Tibial artery (tissue), 4 donors: ENCODE measurements at regions of chr10 and their contacts with region 1.

Region 1: DNA sequence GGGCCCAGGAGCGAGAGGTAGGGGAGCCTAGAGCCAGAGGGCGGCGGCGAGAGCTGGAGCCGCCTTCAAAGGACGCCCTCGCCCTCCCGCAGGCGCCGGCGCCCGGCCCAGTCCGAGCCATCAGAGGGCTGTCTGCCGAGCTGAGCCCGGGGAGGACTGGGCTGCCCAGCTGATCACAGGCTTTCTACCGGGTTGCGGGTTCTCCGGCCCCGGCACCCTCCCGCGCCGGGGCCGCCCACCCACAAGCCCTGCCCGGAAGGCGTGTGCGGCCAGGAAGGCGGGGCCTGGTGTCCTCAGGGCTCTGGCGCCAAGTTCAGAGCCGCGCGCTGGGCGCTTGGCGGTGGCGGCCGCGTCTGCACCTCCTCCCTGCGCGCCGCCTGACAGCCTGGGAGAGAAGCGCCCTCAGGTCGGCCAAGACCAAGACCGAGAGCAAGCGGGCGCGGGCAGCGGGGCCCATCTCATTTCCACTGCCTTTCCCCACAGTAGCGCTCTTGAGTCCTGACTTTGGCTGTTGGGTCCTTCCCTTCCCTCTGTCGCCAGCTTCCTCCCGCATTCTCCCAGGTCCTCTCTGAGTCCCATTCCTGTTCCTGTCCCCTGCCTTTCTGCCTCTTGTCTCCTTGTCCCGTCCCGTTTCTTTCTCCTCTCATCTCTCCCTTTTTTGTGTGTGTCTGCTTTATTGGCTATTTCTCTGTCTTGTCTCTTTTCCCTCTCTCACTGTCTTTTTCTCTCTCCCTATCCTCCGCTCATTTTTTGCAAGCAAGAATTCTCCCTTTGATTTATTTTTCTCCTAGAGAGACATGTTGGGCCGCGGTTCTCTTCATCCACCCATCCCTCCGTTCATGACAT is 60.6 kb upstream of the MSMB start:
- DNase-seq: peak; percentile 58 to 80
- H3K4me3 ChIP-seq: peak overlapping the region; percentile 57 to 70
- H3K27ac ChIP-seq: peak overlapping the region; percentile 5 to 50
- H3K4me1 ChIP-seq: peaks cover 0 to 13% (median 7%) of the 10 kb centered on the region in 4 donors
- H3K27me3 ChIP-seq: no peaks in the 10 kb centered on the region
- CTCF ChIP-seq: peak; percentile 21 to 33

Region 2: DNA sequence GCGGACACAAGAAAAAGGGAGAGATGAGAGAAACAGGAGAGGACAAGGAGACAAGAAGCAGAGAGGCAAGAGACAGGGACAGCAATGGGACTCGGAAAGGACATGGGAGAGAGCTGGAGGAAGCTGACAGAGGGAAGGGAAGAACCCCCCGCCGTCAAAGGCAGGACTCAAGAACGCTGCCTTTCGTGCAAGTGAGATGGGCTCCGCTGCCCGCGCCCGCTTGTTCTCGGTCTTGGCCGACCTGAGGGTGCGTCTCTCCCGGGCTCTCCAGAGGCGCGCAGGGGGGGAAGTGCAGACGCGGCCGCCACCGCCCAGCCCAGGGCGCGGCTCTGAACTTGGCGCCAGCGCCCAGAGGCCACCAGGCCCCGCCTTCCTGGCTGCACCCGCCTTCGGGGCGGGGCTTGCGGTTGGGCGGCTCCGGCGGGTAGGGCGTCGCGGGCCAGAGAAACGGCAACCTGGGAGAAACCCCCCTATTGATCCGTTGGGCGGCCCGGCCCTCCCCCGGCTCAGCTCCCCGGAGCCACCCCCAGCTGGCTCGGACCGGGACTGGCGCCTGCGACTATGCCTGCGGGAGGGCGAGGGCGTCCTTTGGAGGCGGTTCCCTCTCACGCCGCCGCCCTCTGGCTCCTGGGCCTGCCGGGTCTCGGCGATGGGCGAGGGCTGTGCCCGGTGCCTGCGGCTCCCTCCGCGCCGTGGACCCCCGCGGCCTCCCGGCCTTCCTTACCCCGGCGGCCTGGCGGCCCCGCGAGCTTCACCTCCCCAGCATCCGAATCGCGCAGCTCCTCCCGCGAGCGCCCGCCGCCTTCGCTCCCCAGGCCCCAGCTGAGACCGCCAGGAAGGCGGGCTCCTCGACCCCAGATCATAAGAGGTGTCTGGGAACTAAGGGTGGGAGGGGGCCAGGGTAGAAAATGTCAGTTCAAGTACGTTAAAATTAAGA is 177.9 kb after region 1 on chr10:
- intact Hi-C with region 1: loop called (anchors 5 kb)
- DNase-seq: peak; percentile 82 to 93
- H3K4me3 ChIP-seq: peak overlapping the region; percentile 75 to 76
- H3K27ac ChIP-seq: peak overlapping the region; percentile 80 to 91
- H3K4me1 ChIP-seq: peaks cover 0 to 38% (median 17%) of the 10 kb centered on the region in 4 donors
- H3K27me3 ChIP-seq: no peaks in the 10 kb centered on the region
- CTCF ChIP-seq: no peak

Region 3: DNA sequence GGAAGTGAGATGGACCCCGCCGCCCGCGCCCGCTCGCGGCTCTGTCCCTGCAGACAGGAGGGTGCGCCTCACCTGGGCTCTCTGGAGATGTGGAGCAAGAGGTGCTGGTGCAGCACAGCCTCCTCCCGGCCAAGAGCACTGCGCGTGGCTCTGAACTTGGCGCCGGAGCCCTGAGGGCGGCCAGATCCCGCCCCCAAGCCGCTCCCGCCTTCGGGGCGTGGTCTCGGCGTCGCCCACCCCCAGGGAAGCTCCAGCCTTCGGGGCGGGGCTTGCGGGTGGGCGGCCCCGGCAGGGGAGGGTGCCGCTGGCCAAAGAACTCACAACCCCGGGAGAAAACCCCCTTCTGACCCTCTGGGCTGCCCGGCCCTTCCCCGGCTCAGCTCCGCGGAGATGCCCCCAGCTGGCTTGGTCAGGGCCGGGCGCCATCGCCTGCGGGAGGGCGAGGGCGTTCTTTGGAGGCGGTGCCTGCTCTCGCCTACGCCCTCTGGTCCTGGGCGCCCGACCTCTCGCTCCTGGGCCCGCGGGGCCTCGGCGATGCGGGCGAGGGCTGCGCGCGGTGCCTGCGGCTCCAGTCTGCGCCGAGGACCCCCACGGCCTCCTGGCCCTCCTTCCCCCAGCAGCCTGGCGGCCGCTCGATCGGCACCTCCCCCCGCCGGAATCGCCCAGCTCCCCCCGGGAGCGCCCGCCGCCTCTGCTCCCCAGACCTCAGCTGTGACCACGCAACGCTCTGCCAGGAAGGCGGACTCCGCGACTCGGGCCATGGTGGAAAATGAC is 1277.7 kb after region 1 on chr10 and contains the start of gene ZNF488:
- intact Hi-C with region 1: loop called (anchors 5 kb)
- DNase-seq: peak; percentile 76 to 91
- H3K4me3 ChIP-seq: peak within 1 kb of the TSS; percentile 79 to 100
- H3K27ac ChIP-seq: peak within 1 kb of the TSS; percentile 86 to 91
- H3K4me1 ChIP-seq: peaks cover 0 to 11% (median 3%) of the 10 kb centered on the region in 4 donors
- H3K27me3 ChIP-seq: no peaks in the 10 kb centered on the region
- CTCF ChIP-seq: no peak